ENCODE measurements at regions of chr11 and their contacts with region 1.

Region 1: GRCh38 chr11:6022956-6023355 is 7.6 kb downstream of the OR56A1 start:
- DNase-seq: peak; percentile 59
- ATAC-seq: peak; percentile 69
- H3K4me3 ChIP-seq: no peak overlapping the region
- H3K27ac ChIP-seq: no peak overlapping the region
- H3K4me1 ChIP-seq: no peaks in the 10 kb centered on the region
- H3K27me3 ChIP-seq: no peaks in the 10 kb centered on the region
- CTCF ChIP-seq: peak; percentile 63

Region 2: DNA sequence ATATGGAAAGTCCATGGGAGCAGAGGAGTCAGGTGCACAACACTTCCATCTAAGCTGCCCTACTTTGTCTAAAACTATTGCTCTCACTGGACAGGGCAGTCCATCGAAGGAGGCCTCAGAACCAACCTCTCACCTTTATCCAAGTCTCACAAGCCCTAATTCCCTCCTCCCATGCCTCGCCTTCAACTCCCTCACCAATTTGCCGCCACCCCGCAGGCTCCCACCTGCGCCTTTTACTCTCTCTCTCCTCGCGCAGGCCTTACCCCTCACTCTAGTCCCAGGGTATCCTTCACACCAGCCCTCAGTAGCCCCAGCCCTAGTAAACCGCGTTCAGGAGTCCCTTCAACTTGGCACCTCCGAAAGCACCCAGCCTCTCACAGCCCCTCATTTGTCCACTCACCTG is 211.0 kb after region 1 on chr11:
- CTCF ChIA-PET with region 1: no interaction called
- POLR2A ChIA-PET with region 1: no interaction called
- intact Hi-C with region 1: no loop called
- DNase-seq: no peak
- ATAC-seq: peak; percentile 1
- H3K4me3 ChIP-seq: peak overlapping the region; percentile 91
- H3K27ac ChIP-seq: no peak overlapping the region
- H3K4me1 ChIP-seq: peaks cover 11% of the 10 kb centered on the region
- H3K27me3 ChIP-seq: no peaks in the 10 kb centered on the region
- CTCF ChIP-seq: no peak

Region 3: GRCh38 chr11:6298605-6299004 is 275.6 kb after region 1 on chr11:
- CTCF ChIA-PET with region 1: interaction called, 3 read pairs
- POLR2A ChIA-PET with region 1: no interaction called
- intact Hi-C with region 1: loop called (anchors 5 kb)
- DNase-seq: peak; percentile 60
- ATAC-seq: peak; percentile 98
- H3K4me3 ChIP-seq: no peak overlapping the region
- H3K27ac ChIP-seq: no peak overlapping the region
- H3K4me1 ChIP-seq: no peaks in the 10 kb centered on the region
- H3K27me3 ChIP-seq: peaks cover 18% of the 10 kb centered on the region
- CTCF ChIP-seq: peak; percentile 88

Region 4: DNA sequence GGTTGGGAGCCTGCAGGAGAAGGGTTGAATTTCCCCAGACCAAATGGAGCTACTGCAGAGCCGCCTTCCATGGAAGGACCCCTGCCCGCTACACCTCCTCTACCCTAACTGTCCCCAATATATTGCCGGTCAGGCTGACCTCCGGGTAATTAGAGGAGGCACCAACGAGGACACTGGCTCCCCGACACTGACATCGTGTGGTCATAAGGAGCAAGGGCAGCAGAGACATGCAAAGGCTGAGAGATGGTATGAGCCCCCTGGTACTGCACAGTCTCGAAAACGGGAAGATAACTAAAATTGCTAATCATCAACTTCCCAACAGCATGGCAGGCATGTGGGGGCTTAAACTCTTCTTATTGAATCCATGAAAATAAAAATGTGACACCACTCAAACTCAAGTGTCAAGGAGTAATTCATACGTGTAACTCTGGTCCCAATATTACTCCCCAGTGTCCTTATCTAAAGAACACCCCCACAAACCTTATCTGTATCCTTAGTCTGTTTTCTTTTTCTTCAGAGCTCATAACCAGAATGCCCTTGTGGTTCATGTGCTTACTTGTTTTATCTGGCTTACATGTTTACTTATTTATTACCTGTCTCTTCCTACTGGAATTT is 293.0 kb after region 1 on chr11:
- CTCF ChIA-PET with region 1: no interaction called
- POLR2A ChIA-PET with region 1: no interaction called
- intact Hi-C with region 1: loop called (anchors 1 kb)
- DNase-seq: peak; percentile 64
- ATAC-seq: peak; percentile 98
- H3K4me3 ChIP-seq: no peak overlapping the region
- H3K27ac ChIP-seq: no peak overlapping the region
- H3K4me1 ChIP-seq: no peaks in the 10 kb centered on the region
- H3K27me3 ChIP-seq: peaks cover 35% of the 10 kb centered on the region
- CTCF ChIP-seq: peak; percentile 84

Region 5: GRCh38 chr11:6353367-6353987 is 330.5 kb after region 1 on chr11:
- CTCF ChIA-PET with region 1: no interaction called
- POLR2A ChIA-PET with region 1: no interaction called
- intact Hi-C with region 1: loop called (anchors 2 kb)
- DNase-seq: peak; percentile 68
- ATAC-seq: peak; percentile 71
- H3K4me3 ChIP-seq: no peak overlapping the region
- H3K27ac ChIP-seq: no peak overlapping the region
- H3K4me1 ChIP-seq: peaks cover 4% of the 10 kb centered on the region; the same call in 1 of the 2 replicates
- H3K27me3 ChIP-seq: peaks cover 19% of the 10 kb centered on the region; the same call in 1 of the 2 replicates
- CTCF ChIP-seq: peak; percentile 95

Region 6: DNA sequence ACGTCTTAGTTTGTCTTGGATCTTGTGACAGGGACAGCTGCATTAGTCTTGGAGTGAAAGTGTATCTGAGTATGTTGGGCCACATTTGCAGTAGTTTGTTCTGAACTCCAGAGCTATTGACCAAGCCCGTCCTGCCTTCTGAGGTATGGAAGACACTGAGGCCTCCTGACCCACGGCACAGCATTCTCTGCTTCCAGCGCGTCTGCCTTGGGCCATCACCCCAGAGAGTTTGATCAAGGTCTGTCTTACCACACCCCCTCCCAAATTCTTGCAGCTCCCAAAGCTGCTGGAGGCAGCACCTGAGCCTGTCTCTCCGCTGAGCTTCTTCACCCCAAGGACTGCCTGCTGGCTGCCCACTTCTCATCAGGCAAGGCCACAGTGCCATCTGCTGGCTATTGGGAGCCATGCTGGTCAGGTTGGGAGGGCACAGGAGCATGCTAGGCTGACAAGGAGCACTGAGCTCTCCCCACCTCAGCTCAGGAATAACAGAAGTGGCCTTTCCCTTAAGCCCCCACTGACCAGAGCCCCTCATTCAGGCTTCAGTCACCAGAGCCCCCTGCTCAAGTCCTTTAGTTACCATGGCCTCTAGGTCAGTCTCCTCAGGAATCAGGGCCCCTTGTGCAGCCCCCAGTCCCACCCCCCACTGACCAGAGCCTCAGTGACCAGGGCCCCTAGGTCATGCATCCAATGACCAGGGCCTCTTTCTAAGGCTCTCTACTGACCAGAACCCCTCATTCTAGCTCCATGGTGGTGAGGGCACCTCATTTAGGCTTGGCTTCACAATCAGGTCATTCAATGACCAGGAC is 340.1 kb after region 1 on chr11:
- CTCF ChIA-PET with region 1: no interaction called
- POLR2A ChIA-PET with region 1: no interaction called
- intact Hi-C with region 1: loop called (anchors 2 kb)
- DNase-seq: peak; percentile 77
- ATAC-seq: peak; percentile 99
- H3K4me3 ChIP-seq: no peak overlapping the region
- H3K27ac ChIP-seq: no peak overlapping the region
- H3K4me1 ChIP-seq: no peaks in the 10 kb centered on the region
- H3K27me3 ChIP-seq: no peaks in the 10 kb centered on the region
- CTCF ChIP-seq: peak; percentile 87

Measured in PC-3 (cell line).